ENCODE measurements at regions of chr1 and their contacts with region 1.

Region 1: GRCh38 chr1:27116697-27117096 is 38.2 kb downstream of the SLC9A1 start:
- H3K4me3 Mint-ChIP-seq: no peak overlapping the region
- H3K27ac Mint-ChIP-seq: peak overlapping the region; percentile 62
- H3K4me1 Mint-ChIP-seq: peaks cover 88% of the 10 kb centered on the region
- H3K27me3 Mint-ChIP-seq: no peaks in the 10 kb centered on the region

Region 2: GRCh38 chr1:27136998-27137542 is 20.4 kb after region 1 on chr1:
- intact Hi-C with region 1: loop called (anchors 2 kb)
- H3K4me3 Mint-ChIP-seq: peak overlapping the region; percentile 68
- H3K27ac Mint-ChIP-seq: peak overlapping the region; percentile 98
- H3K4me1 Mint-ChIP-seq: peaks cover 83% of the 10 kb centered on the region
- H3K27me3 Mint-ChIP-seq: no peaks in the 10 kb centered on the region

Region 3: GRCh38 chr1:27154991-27155781 is 38.5 kb after region 1 on chr1 and contains the start of gene SLC9A1:
- intact Hi-C with region 1: loop called (anchors 5 kb)
- H3K4me3 Mint-ChIP-seq: peak within 1 kb of the TSS; percentile 91
- H3K27ac Mint-ChIP-seq: peak within 1 kb of the TSS; percentile 90
- H3K4me1 Mint-ChIP-seq: peaks cover 42% of the 10 kb centered on the region
- H3K27me3 Mint-ChIP-seq: no peaks in the 10 kb centered on the region

Measured in dendritic cell treated with granulocyte-macrophage colony-stimulating factor and Interleukin-4, amounts not matched to agents 40 ng/mL and 50 ng/mL, for 4 days (primary cell).